Panc1 (cell line): ENCODE measurements at regions of chr1 and their contacts with region 1.

Region 1: DNA sequence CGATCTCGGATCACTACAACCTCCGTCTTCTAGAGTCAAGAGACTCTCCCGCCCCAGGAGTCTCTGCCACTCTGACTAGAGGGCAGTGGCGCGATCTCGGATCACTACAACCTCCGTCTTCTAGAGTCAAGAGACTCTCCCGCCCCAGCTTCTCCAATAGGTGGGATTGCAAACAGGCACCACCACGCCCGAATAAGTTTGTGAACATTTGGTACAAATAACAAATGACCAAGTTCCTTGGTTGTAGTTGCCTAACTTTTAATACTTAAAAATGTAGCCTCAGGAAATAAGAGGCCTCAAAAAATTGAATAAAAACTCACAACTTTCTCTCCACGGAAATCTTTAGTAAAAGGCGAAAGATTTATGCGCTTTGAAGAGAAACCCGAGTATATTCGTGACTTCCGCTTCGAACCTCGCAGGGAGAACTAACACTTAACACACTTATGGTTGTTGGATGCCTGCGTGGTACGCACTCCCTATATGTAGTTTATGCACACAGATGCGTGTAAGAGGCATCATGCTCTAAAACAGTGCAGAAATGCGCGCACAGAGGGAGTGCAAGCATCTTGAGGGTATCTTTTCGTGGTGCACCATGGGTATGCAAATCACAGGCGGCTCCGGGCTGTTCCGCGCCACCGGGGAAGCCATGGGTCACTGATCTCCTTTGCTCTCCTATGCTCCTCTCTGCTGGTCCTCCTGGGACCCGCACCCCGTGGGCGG is 11.4 kb downstream of the BTBD19 start:
- DNase-seq: peak; percentile 89
- ATAC-seq: peak; percentile 96
- H3K4me3 ChIP-seq: peak overlapping the region; percentile 50 to 76
- H3K27ac ChIP-seq: peak overlapping the region; percentile 99
- H3K4me1 ChIP-seq: peaks cover 10% of the 10 kb centered on the region; the same call in 1 of the 2 replicates
- H3K27me3 ChIP-seq: no peaks in the 10 kb centered on the region
- CTCF ChIP-seq: no peak

Region 2: DNA sequence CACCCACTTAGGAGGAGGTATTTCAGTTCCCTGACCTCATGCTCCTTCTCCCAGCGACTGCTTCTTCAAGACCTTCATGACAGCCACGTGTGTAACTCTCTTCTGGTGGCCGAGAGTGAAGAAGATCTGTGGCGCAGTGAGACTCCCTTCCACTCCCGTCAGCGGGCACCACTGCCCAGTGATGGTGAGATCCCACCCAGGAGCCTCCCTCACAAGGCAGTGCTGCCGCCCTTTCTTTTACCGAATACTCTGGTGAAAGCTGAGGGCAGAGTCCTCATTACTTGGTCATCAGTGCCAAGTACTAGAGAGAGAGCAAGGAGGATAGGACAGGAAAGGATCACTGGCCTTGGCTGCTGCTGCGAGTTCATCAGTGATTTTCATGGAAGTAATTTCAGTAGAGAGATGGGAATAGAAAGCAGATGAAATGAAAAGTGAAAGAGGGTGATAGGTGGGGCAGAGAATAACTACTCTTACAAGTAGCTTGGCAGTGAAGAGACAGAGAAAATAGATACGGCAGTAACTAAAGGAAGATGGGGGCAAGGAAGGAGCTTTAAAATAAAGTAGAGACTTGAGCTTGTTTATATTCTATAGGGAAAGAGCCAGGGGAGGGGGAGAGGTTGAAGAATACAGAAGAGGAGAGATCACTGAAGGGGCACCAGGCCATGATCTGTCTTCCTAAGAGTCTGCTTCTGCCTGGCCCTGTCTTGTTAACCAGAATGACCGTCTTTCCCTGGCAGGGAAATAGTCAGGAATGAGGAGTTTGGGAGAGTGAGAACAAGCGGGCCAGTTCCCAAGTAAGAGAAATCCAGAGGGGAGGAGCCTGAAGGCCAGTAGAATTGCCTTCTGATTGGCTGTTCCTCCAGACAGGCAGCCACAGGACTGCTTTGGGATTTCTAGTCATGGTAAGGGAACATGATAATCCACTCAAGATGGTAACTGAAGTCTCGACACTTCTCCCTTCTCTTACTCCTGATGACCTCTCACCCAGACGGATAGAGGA is 1384.3 kb before region 1 on chr1:
- CTCF ChIA-PET with region 1: no interaction called
- POLR2A ChIA-PET with region 1: no interaction called
- in situ Hi-C with region 1: no loop called
- intact Hi-C with region 1: no loop called
- DNase-seq: no peak
- ATAC-seq: no peak
- H3K4me3 ChIP-seq: no peak overlapping the region
- H3K27ac ChIP-seq: no peak overlapping the region
- H3K4me1 ChIP-seq: no peaks in the 10 kb centered on the region
- H3K27me3 ChIP-seq: no peaks in the 10 kb centered on the region
- CTCF ChIP-seq: no peak

Region 3: GRCh38 chr1:44730741-44731512 is 88.8 kb before region 1 on chr1 and contains the start of gene RNU5D-1:
- CTCF ChIA-PET with region 1: no interaction called
- POLR2A ChIA-PET with region 1: interaction called, 7 read pairs
- in situ Hi-C with region 1: no loop called
- intact Hi-C with region 1: loop called (anchors 10 kb)
- DNase-seq: peak; percentile 99
- ATAC-seq: peak; percentile 91
- H3K4me3 ChIP-seq: peak within 1 kb of the TSS; percentile 9 to 38; a peak in 3 of 4 replicates
- H3K27ac ChIP-seq: peak within 1 kb of the TSS; percentile 97
- H3K4me1 ChIP-seq: peaks cover 5% of the 10 kb centered on the region; the same call in 1 of the 2 replicates
- H3K27me3 ChIP-seq: no peaks in the 10 kb centered on the region
- CTCF ChIP-seq: peak; percentile 96
- total RNA-seq, gene RNU5D-1: not detected

Region 4: DNA sequence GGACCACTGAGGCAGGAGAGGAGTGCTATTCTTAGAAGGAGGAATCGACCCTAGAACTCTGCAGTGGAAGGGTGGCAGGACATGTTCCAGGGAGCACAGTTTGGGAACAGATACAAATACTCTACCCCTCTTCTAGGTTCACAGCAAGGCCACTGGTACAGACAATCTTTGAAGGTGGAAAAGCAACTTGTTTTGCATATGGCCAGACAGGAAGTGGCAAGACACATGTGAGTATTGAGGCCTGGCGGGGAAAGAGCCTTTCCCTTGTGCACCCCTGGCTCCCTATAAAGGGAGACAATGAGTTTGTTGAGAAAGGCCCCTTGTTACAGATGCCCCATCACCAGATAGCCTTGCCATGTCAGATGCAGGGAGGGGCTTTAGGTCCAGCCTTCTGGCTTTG is 62.3 kb before region 1 on chr1:
- CTCF ChIA-PET with region 1: no interaction called
- POLR2A ChIA-PET with region 1: interaction called, 17 read pairs
- in situ Hi-C with region 1: no loop called
- intact Hi-C with region 1: no loop called
- DNase-seq: no peak
- ATAC-seq: no peak
- H3K4me3 ChIP-seq: no peak overlapping the region
- H3K27ac ChIP-seq: no peak overlapping the region
- H3K4me1 ChIP-seq: no peaks in the 10 kb centered on the region
- H3K27me3 ChIP-seq: no peaks in the 10 kb centered on the region
- CTCF ChIP-seq: no peak

Region 5: DNA sequence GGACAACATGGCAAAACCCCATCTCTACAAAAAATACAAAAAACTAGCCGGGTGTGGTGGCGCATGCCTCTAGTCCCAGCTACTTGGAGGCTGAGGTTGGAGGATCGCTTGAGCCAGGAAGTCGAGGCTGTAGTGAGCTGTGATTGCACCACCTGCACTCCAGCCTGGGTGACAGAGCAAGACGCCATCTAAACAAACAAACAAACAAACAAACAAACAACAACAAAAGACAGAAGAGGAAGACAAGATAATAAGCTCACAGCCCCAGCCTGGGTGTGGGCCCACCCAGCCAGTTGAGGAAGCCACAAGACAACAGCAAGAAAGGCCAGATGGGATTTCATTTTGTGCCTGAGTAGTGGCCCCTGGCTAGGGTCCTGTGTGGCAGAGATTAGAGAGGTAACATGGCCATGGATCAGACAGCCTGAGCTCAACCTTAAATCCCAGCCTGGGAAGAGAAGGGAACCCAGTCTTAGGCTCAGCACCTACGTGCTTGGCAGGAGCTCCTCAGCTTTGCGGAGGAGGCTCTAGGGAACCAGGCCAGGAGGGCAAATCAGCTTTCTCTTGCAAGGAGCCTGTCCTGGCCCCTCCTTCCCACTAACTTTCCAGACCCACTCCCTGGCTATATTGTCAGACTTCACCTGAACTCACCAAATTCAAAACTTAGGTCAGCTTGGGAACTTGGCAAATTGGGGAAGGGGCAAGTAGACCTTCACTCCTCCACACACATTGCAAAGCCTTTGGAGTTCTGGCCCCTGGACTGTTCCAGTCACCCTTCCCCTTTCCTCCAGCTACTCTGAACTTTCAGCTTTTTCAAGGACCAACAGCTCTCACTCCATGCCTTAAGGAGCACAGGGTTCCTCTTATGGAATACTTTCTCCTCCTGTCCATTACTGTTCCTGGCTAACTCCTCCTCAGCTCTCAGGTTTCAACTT is 26.7 kb before region 1 on chr1:
- CTCF ChIA-PET with region 1: no interaction called
- POLR2A ChIA-PET with region 1: interaction called, 4 read pairs
- in situ Hi-C with region 1: no loop called
- intact Hi-C with region 1: loop called (anchors 2 kb)
- DNase-seq: no peak
- ATAC-seq: peak; percentile 11; the same call in 1 of the 2 replicates
- H3K4me3 ChIP-seq: no peak overlapping the region
- H3K27ac ChIP-seq: 0 out of 2 replicates have a peak overlapping the region, but pooled peaks have one; percentile 23
- H3K4me1 ChIP-seq: no peaks in the 10 kb centered on the region
- H3K27me3 ChIP-seq: no peaks in the 10 kb centered on the region
- CTCF ChIP-seq: no peak

Region 6: GRCh38 chr1:44799770-44800584 is 19.8 kb before region 1 on chr1 and contains the start of gene PLK3:
- CTCF ChIA-PET with region 1: interaction called, 3 read pairs
- POLR2A ChIA-PET with region 1: interaction called, 25 read pairs
- in situ Hi-C with region 1: no loop called
- intact Hi-C with region 1: no loop called
- DNase-seq: peak; percentile 96
- ATAC-seq: peak; percentile 91
- H3K4me3 ChIP-seq: peak within 1 kb of the TSS; percentile 56 to 83
- H3K27ac ChIP-seq: peak within 1 kb of the TSS; percentile 86
- H3K4me1 ChIP-seq: peaks cover 22% of the 10 kb centered on the region
- H3K27me3 ChIP-seq: no peaks in the 10 kb centered on the region
- CTCF ChIP-seq: peak; percentile 98
- total RNA-seq, gene PLK3: 13.7 TPM

Region 7: DNA sequence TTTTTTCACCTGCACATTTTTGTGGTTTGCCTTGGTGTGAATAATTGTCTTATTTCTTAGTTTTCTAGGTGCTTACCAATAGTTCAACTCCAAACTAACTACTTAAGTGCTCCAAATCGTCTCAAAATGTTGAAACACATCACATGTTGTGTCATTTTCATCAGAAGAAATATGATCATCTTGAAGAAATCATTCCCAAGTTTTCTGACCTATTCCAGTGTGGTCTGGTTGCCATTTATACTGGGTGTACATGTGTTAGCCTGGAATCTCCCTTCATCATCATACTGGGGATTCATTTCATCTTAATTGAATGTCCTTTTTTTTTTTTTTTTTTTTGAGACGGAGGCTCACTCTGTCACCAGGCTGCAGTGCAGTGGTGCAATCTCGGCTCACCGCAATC is 99.6 kb after region 1 on chr1:
- CTCF ChIA-PET with region 1: no interaction called
- POLR2A ChIA-PET with region 1: interaction called, 17 read pairs
- in situ Hi-C with region 1: no loop called
- intact Hi-C with region 1: no loop called
- DNase-seq: no peak
- ATAC-seq: no peak
- H3K4me3 ChIP-seq: no peak overlapping the region
- H3K27ac ChIP-seq: no peak overlapping the region
- H3K4me1 ChIP-seq: no peaks in the 10 kb centered on the region
- H3K27me3 ChIP-seq: no peaks in the 10 kb centered on the region
- CTCF ChIP-seq: no peak